ENCODE measurements at regions of chr16 and their contacts with region 1.

Region 1: GRCh38 chr16:3158471-3159314 is 23.9 kb downstream of the ZNF213 start:
- DNase-seq: peak; percentile 96
- H3K4me3 Mint-ChIP-seq: peak overlapping the region; percentile 88
- H3K27ac Mint-ChIP-seq: peak overlapping the region; percentile 91
- H3K4me1 Mint-ChIP-seq: peaks cover 47% of the 10 kb centered on the region
- H3K27me3 Mint-ChIP-seq: peaks cover 38% of the 10 kb centered on the region

Region 2: DNA sequence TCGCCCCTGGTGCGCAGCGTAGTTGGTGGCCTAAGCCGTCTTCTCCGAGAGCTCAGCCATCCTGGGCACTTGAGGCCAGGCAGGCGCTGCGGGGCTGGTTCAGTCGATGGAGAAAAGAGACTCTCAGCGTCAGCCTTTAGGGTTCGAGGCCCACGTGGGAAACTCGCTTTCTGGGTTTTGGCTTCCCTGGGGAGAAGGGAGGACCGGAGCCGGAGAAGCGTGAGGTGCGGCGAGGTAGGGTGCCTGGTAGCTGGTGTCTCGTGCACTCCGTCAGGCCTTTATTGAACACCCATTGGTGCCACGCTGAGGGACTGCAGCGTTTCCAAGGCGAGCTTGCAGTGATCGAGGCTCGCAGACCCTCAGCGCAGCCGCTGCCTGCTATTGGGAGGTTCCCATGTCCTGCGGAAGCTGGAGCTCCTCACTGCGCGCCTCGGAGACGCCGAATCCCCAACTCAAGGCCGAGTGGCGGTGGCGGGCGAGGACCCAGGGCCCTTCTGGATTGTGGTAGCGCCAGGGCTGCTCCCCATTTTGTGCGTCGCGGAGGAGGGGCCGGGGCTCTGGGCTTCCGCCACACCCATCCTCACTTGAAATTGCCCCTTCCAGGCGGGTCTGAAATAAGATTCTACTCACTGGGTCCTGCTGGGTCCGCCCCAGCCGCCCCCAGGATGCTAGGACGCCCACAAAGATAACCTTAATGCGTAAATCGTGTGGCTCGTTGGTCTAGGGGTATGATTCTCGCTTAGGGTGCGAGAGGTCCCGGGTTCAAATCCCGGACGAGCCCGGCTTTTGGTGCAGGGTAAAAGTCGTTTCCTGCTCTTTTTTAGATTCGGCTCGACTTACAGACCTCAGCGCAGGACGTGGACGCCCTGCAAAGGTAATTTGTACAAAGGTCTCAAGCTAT is 30.5 kb after region 1 on chr16:
- CTCF ChIA-PET with region 1: interaction called, 9 read pairs
- POLR2A ChIA-PET with region 1: interaction called, 10 read pairs
- DNase-seq: peak; percentile 27
- H3K4me3 Mint-ChIP-seq: peak overlapping the region; percentile 64
- H3K27ac Mint-ChIP-seq: peak overlapping the region; percentile 73
- H3K4me1 Mint-ChIP-seq: peaks cover 44% of the 10 kb centered on the region
- H3K27me3 Mint-ChIP-seq: peaks cover 76% of the 10 kb centered on the region

Region 3: DNA sequence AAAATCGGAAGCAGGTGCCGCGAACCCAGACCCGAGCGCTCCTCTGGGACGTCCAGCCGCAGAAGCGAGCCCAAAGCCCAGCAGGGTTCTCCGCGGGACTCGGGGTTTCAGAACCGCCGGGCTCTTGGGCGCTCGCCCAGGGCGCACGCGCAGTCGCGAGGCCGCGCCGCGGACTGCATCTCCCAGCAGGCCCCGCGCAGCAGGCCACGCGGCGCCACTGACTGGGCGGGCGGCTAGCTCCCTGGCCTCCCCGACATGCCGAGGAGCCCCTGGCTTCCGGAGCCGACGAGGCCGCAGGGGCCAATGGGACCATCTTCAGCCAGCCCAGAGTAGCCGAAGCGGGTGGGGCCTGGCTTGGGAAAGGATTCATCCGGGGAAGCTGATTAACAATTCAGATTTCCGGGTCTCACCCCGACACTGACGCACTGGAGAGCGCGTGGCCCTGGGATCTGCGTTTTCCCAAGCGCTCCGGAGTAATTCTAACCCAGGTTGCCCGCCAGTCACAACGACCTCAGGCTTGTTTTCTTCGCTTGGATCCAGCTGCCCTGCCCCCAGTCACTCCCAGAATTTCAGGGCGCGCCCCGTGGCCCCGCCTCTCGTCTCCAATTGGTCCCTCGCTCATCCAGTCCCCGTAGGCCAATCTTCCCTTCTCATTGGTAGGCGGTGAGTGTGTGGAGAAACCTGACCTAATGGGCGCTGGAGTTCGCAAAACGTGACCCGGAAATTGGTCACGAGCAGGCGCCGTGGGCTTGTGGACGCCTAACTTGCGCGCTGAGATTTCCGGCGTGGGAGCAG is 124.2 kb after region 1 on chr16 and contains the start of gene ZNF263:
- CTCF ChIA-PET with region 1: no interaction called
- POLR2A ChIA-PET with region 1: no interaction called
- DNase-seq: peak; percentile 96
- H3K4me3 Mint-ChIP-seq: peak within 1 kb of the TSS; percentile 90
- H3K27ac Mint-ChIP-seq: peak within 1 kb of the TSS; percentile 96
- H3K4me1 Mint-ChIP-seq: peaks cover 30% of the 10 kb centered on the region
- H3K27me3 Mint-ChIP-seq: peaks cover 4% of the 10 kb centered on the region
- total RNA-seq, gene ZNF263: 25.7 to 25.9 TPM

Measured in activated CD4-positive, alpha-beta T cell treated with anti-CD3 and anti-CD28 coated beads, Interleukin-2, amount 10 ng/mL, durations not matched to agents 7 days and 5 days (primary cell).